ENCODE measurements at regions of chr22 and their contacts with region 1.

Region 1: DNA sequence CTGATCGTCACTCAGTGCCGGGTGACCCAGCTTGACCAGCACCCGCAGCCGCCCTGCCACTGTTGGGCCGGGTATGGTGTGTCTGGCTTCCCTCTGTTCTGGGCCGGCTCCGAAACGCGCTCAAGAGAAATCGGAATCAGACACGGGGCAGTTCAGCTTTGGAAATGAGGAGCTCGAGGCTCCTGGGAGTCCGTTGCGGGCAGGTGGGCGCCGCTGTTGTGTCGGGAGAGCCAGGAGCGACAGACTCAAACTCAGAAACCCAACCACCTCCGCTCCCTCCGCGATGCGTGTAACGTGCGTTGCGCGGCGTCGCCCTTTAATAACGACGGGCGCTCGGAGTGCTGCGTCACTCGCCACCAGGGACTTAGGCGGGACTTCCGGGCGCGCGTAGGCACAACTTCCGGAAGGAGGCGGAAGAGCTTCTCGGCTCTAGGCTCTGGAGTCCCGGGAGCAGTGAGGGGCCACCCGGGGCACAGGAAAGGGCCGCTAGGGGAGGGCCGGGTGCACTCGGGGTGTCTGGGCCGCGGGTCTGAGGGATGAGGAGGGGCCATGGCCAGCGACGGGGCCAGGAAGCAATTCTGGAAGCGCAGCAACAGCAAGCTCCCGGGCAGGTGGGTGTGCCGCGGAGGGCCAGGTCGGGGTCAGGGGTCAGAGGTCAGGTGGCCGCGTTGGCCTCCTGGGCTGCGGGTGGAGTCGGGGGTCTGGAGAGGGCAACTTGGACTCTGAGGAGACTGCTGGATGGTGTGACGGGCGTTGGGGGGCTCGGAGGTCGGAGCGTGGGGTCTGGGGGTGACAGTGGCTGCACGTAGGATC is at the start of gene TBC1D22A:
- DNase-seq: no peak
- ATAC-seq: peak; percentile 80
- H3K4me3 ChIP-seq: peak within 1 kb of the TSS; percentile 97
- H3K27ac ChIP-seq: peak within 1 kb of the TSS; percentile 91
- H3K4me1 ChIP-seq: peaks cover 13% of the 10 kb centered on the region
- H3K27me3 ChIP-seq: no peaks in the 10 kb centered on the region
- CTCF ChIP-seq: 0 out of 6 replicates have a peak, but pooled peaks of 2 of the 3 experiments have one; percentile 0 to 9
- EP300 ChIP-seq: no peak
- POLR2A ChIP-seq: peak; percentile 99
- RAD21 ChIP-seq: no peak
- polyA plus RNA-seq, gene TBC1D22A: 0.63 to 2.6 TPM

Region 2: GRCh38 chr22:46748908-46749675 is 13.4 kb before region 1 on chr22:
- CTCF ChIA-PET with region 1: interaction called, 11 read pairs
- POLR2A ChIA-PET with region 1: interaction called, 3 read pairs
- RAD21 ChIA-PET with region 1: interaction called, 3 read pairs
- SMC1A ChIA-PET with region 1: interaction called, 4 read pairs
- in situ Hi-C with region 1: no loop called
- intact Hi-C with region 1: no loop called
- DNase-seq: no peak
- ATAC-seq: peak; percentile 16; the same call in 1 of the 3 replicates
- H3K4me3 ChIP-seq: no peak overlapping the region
- H3K27ac ChIP-seq: no peak overlapping the region
- H3K4me1 ChIP-seq: peaks cover 9% of the 10 kb centered on the region
- H3K27me3 ChIP-seq: no peaks in the 10 kb centered on the region
- CTCF ChIP-seq: no peak
- EP300 ChIP-seq: no peak
- POLR2A ChIP-seq: no peak
- RAD21 ChIP-seq: no peak

Region 3: GRCh38 chr22:46780453-46780852 is 18.0 kb after region 1 on chr22:
- CTCF ChIA-PET with region 1: interaction called, 117 read pairs
- POLR2A ChIA-PET with region 1: interaction called, 56 read pairs
- RAD21 ChIA-PET with region 1: interaction called, 82 read pairs
- SMC1A ChIA-PET with region 1: interaction called, 72 read pairs
- in situ Hi-C with region 1: no loop called
- intact Hi-C with region 1: no loop called
- DNase-seq: no peak
- ATAC-seq: no peak
- H3K4me3 ChIP-seq: no peak overlapping the region; the same call in 1 of the 2 replicates
- H3K27ac ChIP-seq: no peak overlapping the region
- H3K4me1 ChIP-seq: peaks cover 31% of the 10 kb centered on the region
- H3K27me3 ChIP-seq: no peaks in the 10 kb centered on the region
- CTCF ChIP-seq: no peak
- EP300 ChIP-seq: no peak
- POLR2A ChIP-seq: no peak
- RAD21 ChIP-seq: no peak

Region 4: DNA sequence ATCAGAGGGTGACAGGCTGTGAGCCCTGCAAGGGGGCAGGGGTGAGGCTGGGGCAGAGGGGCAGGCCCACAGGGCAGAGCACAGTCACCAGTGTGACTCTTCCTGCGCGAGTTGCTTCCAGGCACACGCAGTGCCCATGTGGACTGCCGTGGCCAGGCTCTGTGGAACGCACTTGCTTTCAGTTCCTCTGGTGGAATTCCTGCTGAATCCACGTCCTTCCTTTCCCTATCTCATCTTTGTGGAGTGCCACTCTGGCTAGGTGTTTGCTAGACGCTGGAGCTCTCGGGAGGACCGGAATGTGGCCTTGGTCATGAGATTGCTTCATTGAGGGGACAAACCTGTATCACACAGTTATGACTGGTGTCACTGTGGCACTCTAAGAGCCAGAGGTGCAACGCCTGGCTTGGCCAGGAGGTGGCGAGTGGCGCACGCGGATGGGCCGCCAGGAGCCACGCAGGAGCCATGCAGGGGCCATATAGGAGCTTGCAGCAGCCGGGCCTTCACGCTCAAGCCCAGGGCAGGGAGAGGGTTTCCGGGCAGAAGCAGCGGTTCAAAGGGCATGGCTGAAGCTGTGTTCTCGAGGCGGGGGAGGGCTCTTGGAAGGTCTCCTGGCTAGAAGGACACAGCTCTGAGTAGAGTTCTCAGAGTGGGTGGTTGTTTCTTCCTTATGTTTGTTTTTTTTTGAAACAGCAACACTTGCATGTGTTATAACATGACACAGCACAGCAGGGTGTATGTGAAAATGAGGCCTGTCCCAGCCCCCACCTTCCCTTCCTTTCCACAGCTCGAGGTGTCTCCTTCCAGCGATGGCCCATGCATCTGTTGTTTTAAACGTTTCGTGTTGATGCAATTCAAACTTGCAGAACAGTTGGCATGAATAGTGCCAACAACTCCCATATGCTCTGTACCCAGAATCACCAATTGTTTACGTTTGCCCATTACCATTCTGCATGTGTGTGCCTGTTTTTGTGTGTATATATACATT is 36.2 kb after region 1 on chr22:
- CTCF ChIA-PET with region 1: interaction called, 297 read pairs
- POLR2A ChIA-PET with region 1: interaction called, 5 read pairs
- RAD21 ChIA-PET with region 1: interaction called, 199 read pairs
- SMC1A ChIA-PET with region 1: interaction called, 100 read pairs
- in situ Hi-C with region 1: no loop called
- intact Hi-C with region 1: loop called (anchors 1 kb)
- DNase-seq: no peak
- ATAC-seq: peak; percentile 93
- H3K4me3 ChIP-seq: no peak overlapping the region
- H3K27ac ChIP-seq: no peak overlapping the region
- H3K4me1 ChIP-seq: no peaks in the 10 kb centered on the region
- H3K27me3 ChIP-seq: no peaks in the 10 kb centered on the region
- CTCF ChIP-seq: peak; percentile 70 to 87 (median 87)
- EP300 ChIP-seq: no peak
- POLR2A ChIP-seq: no peak
- RAD21 ChIP-seq: peak; percentile 63

Region 5: GRCh38 chr22:47012589-47013411 is 250.4 kb after region 1 on chr22:
- CTCF ChIA-PET with region 1: no interaction called
- POLR2A ChIA-PET with region 1: no interaction called
- RAD21 ChIA-PET with region 1: no interaction called
- SMC1A ChIA-PET with region 1: no interaction called
- in situ Hi-C with region 1: no loop called
- intact Hi-C with region 1: no loop called
- DNase-seq: no peak
- ATAC-seq: no peak
- H3K4me3 ChIP-seq: no peak overlapping the region
- H3K27ac ChIP-seq: no peak overlapping the region
- H3K4me1 ChIP-seq: no peaks in the 10 kb centered on the region
- H3K27me3 ChIP-seq: no peaks in the 10 kb centered on the region
- CTCF ChIP-seq: no peak
- EP300 ChIP-seq: no peak
- POLR2A ChIP-seq: no peak
- RAD21 ChIP-seq: no peak

Region 6: DNA sequence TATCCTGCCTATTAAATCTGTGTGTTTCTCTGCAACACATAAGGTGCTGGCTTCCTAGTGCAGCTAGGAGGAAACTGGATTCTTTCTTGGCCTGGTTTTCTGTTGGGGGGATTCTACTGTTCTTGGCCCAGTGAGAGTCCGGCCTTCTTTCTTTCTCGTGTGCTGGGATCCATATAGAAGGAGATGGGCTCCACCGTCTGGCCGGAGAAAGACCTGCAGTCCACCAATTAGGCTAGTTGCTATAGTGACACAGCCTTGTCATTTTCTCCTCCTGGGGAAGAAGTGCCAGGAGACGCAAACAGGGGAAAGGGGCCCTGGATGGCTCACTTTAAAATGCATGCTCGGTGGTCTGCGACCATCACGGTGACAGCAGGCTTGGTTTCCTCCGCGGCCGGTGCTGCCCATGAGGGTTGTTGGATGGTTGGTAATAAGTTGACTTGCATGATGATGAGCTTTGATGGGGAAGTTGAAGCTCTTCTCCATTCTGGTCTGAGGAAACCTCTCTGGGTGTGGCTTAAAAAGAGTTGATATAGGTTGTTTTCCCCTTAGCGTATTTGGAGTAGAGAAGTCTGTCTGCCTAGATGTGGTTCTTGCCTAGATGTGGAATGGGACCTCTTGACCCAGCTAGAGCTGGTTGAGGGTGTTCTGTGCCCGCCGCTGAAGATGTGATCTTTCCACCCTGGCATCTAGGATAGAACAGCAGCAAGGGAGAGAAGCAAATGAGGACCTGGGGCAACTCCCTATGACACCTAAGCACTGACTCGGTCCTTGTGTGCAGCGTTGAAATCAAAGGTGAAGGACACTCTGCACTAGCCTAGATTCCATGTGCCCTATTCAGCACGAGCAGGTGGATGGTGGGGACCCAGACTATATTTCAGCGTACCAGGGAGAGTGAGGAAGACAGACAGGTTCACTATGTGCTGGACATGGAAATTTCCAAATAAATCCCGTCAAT is 1730.2 kb after region 1 on chr22:
- CTCF ChIA-PET with region 1: no interaction called
- POLR2A ChIA-PET with region 1: no interaction called
- RAD21 ChIA-PET with region 1: no interaction called
- SMC1A ChIA-PET with region 1: interaction called, 3 read pairs
- in situ Hi-C with region 1: loop called (anchors 10 kb)
- intact Hi-C with region 1: no loop called
- DNase-seq: peak; percentile 1
- ATAC-seq: peak; percentile 79
- H3K4me3 ChIP-seq: no peak overlapping the region
- H3K27ac ChIP-seq: no peak overlapping the region
- H3K4me1 ChIP-seq: no peaks in the 10 kb centered on the region
- H3K27me3 ChIP-seq: peaks cover 0 to 5% of the 10 kb centered on the region in 2 experiments; a peak in 3 of 4 replicates
- CTCF ChIP-seq: peak; percentile 76 to 80 (median 79)
- EP300 ChIP-seq: no peak
- POLR2A ChIP-seq: no peak
- RAD21 ChIP-seq: peak; percentile 81